Gastrocnemius medialis (tissue), 4 donors: ENCODE measurements at regions of chr6 and their contacts with region 1.

Region 1: GRCh38 chr6:104799134-104799657 is 60.5 kb downstream of the HACE1 start:
- DNase-seq: no peak
- ATAC-seq: no peak
- H3K4me3 ChIP-seq: no peak overlapping the region
- H3K27ac ChIP-seq: no peak overlapping the region
- H3K4me1 ChIP-seq: no peaks in the 10 kb centered on the region
- H3K27me3 ChIP-seq: no peaks in the 10 kb centered on the region
- CTCF ChIP-seq: no peak
- POLR2A ChIP-seq: no peak

Region 2: GRCh38 chr6:104718672-104719071 is 80.5 kb before region 1 on chr6:
- in situ Hi-C with region 1: no loop called
- intact Hi-C with region 1: loop called (anchors 2 kb)
- DNase-seq: no peak
- ATAC-seq: no peak
- H3K4me3 ChIP-seq: no peak overlapping the region
- H3K27ac ChIP-seq: no peak overlapping the region
- H3K4me1 ChIP-seq: no peaks in the 10 kb centered on the region
- H3K27me3 ChIP-seq: no peaks in the 10 kb centered on the region
- CTCF ChIP-seq: no peak
- POLR2A ChIP-seq: no peak